Activated CD4-positive, alpha-beta memory T cell treated with anti-CD3 and anti-CD28 coated beads for 36 hours (primary cell): ENCODE measurements at regions of chr5 and their contacts with region 1.

Region 1: GRCh38 chr5:157540707-157541446 is 34.7 kb downstream of the ADAM19 start:
- DNase-seq: peak; percentile 74
- H3K4me3 Mint-ChIP-seq: peak overlapping the region; percentile 65
- H3K27ac Mint-ChIP-seq: peak overlapping the region; percentile 98
- H3K4me1 Mint-ChIP-seq: peaks cover 87% of the 10 kb centered on the region
- H3K27me3 Mint-ChIP-seq: no peaks in the 10 kb centered on the region

Region 2: DNA sequence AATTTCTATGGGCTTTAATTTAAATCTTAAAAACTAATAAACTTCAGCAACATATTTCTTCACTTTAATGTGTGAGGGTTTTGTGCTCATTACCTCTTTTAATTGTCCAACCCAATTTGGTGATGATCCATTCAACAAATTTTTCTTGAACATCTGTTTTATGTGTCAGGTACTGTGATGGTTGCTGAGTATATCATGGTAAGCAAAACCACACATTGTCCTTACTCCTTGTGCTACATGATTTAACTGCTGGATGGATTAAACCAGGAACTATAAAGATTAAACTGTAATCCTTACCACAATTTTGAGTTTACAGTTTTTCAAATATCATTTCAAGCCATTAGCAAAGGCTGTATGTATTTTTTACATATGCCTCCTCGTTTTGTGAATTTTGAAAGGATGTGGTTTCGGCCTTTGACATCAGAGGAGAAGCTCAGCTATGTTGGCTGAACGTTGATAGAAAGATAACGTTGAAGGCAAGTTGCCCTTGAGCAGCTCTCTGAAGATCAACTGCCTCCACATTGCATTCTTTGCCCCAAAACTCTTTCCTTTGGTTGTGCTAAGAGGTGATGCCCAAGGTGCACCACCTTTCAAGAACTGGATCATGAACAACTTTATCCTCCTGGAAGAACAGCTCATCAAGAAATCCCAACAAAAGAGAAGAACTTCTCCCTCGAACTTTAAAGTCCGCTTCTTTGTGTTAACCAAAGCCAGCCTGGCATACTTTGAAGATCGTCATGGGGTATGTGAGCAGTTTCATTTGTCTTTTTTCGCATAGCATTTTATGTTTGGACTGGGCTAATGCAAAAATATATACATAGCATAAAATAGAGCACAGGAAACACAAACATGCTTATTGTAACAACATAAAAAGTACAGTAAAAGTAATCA is 360.3 kb before region 1 on chr5 and contains the start of gene ITK:
- CTCF ChIA-PET with region 1: no interaction called
- POLR2A ChIA-PET with region 1: no interaction called
- intact Hi-C with region 1: loop called (anchors 5 kb)
- DNase-seq: peak; percentile 58
- H3K4me3 Mint-ChIP-seq: peak within 1 kb of the TSS; percentile 99
- H3K27ac Mint-ChIP-seq: peak within 1 kb of the TSS; percentile 100
- H3K4me1 Mint-ChIP-seq: peaks cover 45% of the 10 kb centered on the region
- H3K27me3 Mint-ChIP-seq: no peaks in the 10 kb centered on the region
- total RNA-seq, gene ITK: 236 to 240 TPM

Region 3: GRCh38 chr5:157516626-157517325 is 24.1 kb before region 1 on chr5:
- CTCF ChIA-PET with region 1: interaction called, 3 read pairs
- POLR2A ChIA-PET with region 1: interaction called, 3 read pairs
- intact Hi-C with region 1: loop called (anchors 2 kb)
- DNase-seq: no peak
- H3K4me3 Mint-ChIP-seq: peak overlapping the region; percentile 7
- H3K27ac Mint-ChIP-seq: peak overlapping the region; percentile 55
- H3K4me1 Mint-ChIP-seq: peaks cover 39% of the 10 kb centered on the region
- H3K27me3 Mint-ChIP-seq: no peaks in the 10 kb centered on the region

Region 4: GRCh38 chr5:157596487-157596886 is 55.6 kb after region 1 on chr5:
- CTCF ChIA-PET with region 1: interaction called, 7 read pairs
- POLR2A ChIA-PET with region 1: interaction called, 12 read pairs
- intact Hi-C with region 1: loop called (anchors 1 kb)
- DNase-seq: peak; percentile 83
- H3K4me3 Mint-ChIP-seq: peak overlapping the region; percentile 11
- H3K27ac Mint-ChIP-seq: peak overlapping the region; percentile 91
- H3K4me1 Mint-ChIP-seq: peaks cover 95% of the 10 kb centered on the region
- H3K27me3 Mint-ChIP-seq: no peaks in the 10 kb centered on the region

Region 5: DNA sequence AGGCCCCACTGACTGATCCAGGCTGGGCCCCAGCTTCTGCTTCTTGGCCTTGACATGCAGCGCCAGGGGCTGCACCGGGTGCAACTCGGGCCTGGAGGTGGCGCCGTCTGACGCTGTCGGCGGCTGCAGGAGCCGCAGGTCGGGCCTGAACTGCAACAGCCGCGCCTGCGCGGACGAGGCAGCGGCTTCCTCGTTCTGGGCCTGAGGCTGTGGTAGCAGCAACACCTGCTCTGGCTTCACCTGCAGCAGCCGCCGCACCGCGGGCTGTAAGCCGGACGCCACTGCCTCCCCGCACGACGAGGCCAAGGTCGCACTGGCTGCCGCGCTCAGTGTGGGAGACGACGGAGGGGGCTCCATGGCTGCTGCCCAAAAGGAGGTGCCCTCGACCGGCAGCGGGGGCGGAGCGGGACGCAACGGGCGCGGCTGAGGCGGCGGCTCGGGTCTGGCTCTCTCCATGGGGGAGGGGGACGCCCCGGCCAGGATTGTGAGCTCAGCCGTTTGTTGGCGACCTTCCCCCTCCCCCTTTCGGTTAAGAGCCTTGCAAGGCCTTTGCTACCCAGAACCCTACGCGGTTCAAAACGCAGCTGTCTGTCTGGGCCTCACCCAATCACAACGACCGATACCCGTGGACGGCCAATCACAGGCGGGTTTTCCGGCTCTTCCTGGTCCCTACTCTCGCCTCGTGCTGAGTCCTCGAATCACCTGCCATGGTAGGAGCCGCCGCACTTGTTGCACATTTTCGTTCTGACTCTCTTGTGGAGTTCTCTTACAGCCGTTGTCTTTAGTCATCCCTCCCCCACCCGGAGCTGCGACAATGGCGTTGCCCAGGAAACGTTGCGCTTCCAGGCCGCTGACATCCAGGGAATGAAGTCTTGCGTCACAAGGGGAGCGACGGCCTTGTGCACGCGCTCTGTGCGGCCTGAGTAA is 111.0 kb after region 1 on chr5 and contains the start of gene SOX30:
- CTCF ChIA-PET with region 1: no interaction called
- POLR2A ChIA-PET with region 1: interaction called, 3 read pairs
- intact Hi-C with region 1: loop called (anchors 5 kb)
- DNase-seq: peak; percentile 91
- H3K4me3 Mint-ChIP-seq: peak within 1 kb of the TSS; percentile 76
- H3K27ac Mint-ChIP-seq: peak within 1 kb of the TSS; percentile 79
- H3K4me1 Mint-ChIP-seq: peaks cover 17% of the 10 kb centered on the region
- H3K27me3 Mint-ChIP-seq: no peaks in the 10 kb centered on the region
- total RNA-seq, gene SOX30: 0.65 to 0.93 TPM

Region 6: GRCh38 chr5:157731272-157732129 is 190.6 kb after region 1 on chr5 and contains the start of gene THG1L:
- CTCF ChIA-PET with region 1: no interaction called
- POLR2A ChIA-PET with region 1: interaction called, 3 read pairs
- intact Hi-C with region 1: loop called (anchors 2 kb)
- DNase-seq: peak; percentile 100
- H3K4me3 Mint-ChIP-seq: peak within 1 kb of the TSS; percentile 95
- H3K27ac Mint-ChIP-seq: peak within 1 kb of the TSS; percentile 97
- H3K4me1 Mint-ChIP-seq: peaks cover 33% of the 10 kb centered on the region
- H3K27me3 Mint-ChIP-seq: no peaks in the 10 kb centered on the region
- total RNA-seq, gene THG1L: 28.6 to 33.5 TPM